GM12878 (cell line): ENCODE measurements at regions of chr2 and their contacts with region 1.

Region 1: GRCh38 chr2:42663106-42663780 is 94.8 kb downstream of the MTA3 start:
- DNase-seq: peak; percentile 46
- ATAC-seq: peak; percentile 96
- H3K4me3 ChIP-seq: no peak overlapping the region
- H3K27ac ChIP-seq: no peak overlapping the region; the same call in 1 of the 2 replicates
- H3K4me1 ChIP-seq: peaks cover 3% of the 10 kb centered on the region; the same call in 1 of the 2 replicates
- H3K27me3 ChIP-seq: no peaks in the 10 kb centered on the region
- CTCF ChIP-seq: peak; percentile 98 to 99 (median 99)
- EP300 ChIP-seq: no peak
- POLR2A ChIP-seq: no peak
- RAD21 ChIP-seq: peak; percentile 98

Region 2: DNA sequence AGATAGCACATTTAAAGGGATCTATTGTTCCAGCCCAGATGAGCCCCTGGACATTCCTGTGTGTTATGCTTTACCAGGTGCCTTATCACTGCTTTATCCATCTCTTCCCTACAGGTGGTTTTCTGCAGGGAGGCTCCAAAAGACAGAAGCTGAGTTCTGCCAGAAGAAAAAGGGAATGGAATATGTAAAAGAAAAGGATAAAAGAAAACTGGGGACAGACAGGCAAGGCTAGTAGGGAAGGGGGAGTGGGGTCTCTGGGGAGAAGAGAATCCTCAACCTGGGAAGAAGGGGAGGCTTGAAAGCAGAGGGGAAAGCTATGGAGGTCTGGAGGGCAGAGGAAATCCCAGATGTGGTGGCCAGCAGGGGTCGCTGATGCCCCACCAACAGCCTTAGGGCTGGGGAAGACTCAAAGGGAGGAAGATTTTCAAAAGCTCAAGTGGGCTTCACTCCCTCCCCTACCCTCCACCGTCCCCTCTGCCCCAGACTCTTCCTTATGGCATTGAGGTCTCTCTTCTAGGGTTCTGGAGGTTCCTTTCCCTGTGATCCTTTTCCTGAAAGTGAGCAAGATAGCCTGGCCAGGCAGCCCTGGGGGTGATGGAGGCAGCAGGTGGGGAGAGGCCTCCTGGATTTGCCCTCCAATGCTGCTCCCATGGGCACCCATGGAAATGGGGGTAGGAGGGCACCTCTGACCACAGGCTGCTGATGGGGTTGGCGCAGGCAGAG is 793.5 kb before region 1 on chr2:
- CTCF ChIA-PET with region 1: no interaction called
- POLR2A ChIA-PET with region 1: no interaction called
- RAD21 ChIA-PET with region 1: no interaction called
- SMC1A ChIA-PET with region 1: no interaction called
- in situ Hi-C with region 1: loop called (anchors 25 kb)
- intact Hi-C with region 1: no loop called
- DNase-seq: peak; percentile 25
- ATAC-seq: peak; percentile 94
- H3K4me3 ChIP-seq: no peak overlapping the region
- H3K27ac ChIP-seq: no peak overlapping the region
- H3K4me1 ChIP-seq: no peaks in the 10 kb centered on the region
- H3K27me3 ChIP-seq: no peaks in the 10 kb centered on the region; a peak in 2 of 4 replicates
- CTCF ChIP-seq: peak; percentile 78 to 90 (median 84)
- EP300 ChIP-seq: no peak
- POLR2A ChIP-seq: no peak
- RAD21 ChIP-seq: peak; percentile 98

Region 3: GRCh38 chr2:42503291-42503690 is 160.0 kb before region 1 on chr2:
- CTCF ChIA-PET with region 1: interaction called, 63 read pairs
- POLR2A ChIA-PET with region 1: no interaction called
- RAD21 ChIA-PET with region 1: interaction called, 13 read pairs
- SMC1A ChIA-PET with region 1: interaction called, 62 read pairs
- in situ Hi-C with region 1: loop called (anchors 5 kb)
- intact Hi-C with region 1: no loop called
- DNase-seq: no peak
- ATAC-seq: no peak
- H3K4me3 ChIP-seq: no peak overlapping the region
- H3K27ac ChIP-seq: no peak overlapping the region
- H3K4me1 ChIP-seq: no peaks in the 10 kb centered on the region
- H3K27me3 ChIP-seq: no peaks in the 10 kb centered on the region
- CTCF ChIP-seq: no peak
- EP300 ChIP-seq: no peak
- POLR2A ChIP-seq: no peak
- RAD21 ChIP-seq: no peak

Region 4: GRCh38 chr2:42575458-42576064 is 87.7 kb before region 1 on chr2:
- CTCF ChIA-PET with region 1: interaction called, 13 read pairs
- POLR2A ChIA-PET with region 1: interaction called, 4 read pairs
- RAD21 ChIA-PET with region 1: interaction called, 6 read pairs
- SMC1A ChIA-PET with region 1: interaction called, 3 read pairs
- in situ Hi-C with region 1: no loop called
- intact Hi-C with region 1: no loop called
- DNase-seq: no peak
- ATAC-seq: peak; percentile 88
- H3K4me3 ChIP-seq: peak overlapping the region; percentile 24
- H3K27ac ChIP-seq: peak overlapping the region; percentile 43
- H3K4me1 ChIP-seq: peaks cover 11% of the 10 kb centered on the region
- H3K27me3 ChIP-seq: no peaks in the 10 kb centered on the region
- CTCF ChIP-seq: no peak
- EP300 ChIP-seq: no peak
- POLR2A ChIP-seq: no peak
- RAD21 ChIP-seq: no peak

Region 5: DNA sequence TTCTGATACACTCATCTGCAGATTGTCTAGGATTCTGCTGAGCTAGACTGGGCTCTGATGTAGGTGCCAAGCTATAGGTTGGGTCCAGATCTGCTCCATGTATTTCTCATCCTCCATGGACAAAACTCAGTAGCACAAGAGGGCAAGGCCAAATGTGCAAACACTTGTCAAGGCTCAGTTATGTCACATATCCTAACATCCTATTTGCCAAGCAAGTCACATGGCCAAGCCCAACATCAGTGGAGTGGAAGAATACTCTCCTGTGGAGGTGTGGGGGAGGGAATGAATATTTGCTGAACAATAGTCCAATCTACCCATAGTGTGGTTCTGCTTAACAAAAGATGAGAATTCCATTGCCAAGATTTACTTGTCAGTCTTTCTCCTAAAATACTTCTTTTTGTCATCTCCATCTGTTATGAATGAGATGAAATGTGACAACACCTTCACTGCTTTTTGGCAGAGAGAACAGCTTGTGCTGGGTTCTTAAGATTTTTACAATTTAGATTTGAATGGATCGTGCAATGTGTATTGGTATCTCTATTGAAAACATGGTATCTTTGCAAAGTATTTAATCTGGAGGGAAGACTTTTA is 10.8 kb after region 1 on chr2:
- CTCF ChIA-PET with region 1: interaction called, 13 read pairs
- POLR2A ChIA-PET with region 1: no interaction called
- RAD21 ChIA-PET with region 1: interaction called, 3 read pairs
- SMC1A ChIA-PET with region 1: interaction called, 15 read pairs
- in situ Hi-C with region 1: no loop called
- intact Hi-C with region 1: no loop called
- DNase-seq: no peak
- ATAC-seq: no peak
- H3K4me3 ChIP-seq: no peak overlapping the region
- H3K27ac ChIP-seq: no peak overlapping the region
- H3K4me1 ChIP-seq: no peaks in the 10 kb centered on the region
- H3K27me3 ChIP-seq: no peaks in the 10 kb centered on the region
- CTCF ChIP-seq: no peak
- EP300 ChIP-seq: no peak
- POLR2A ChIP-seq: no peak
- RAD21 ChIP-seq: no peak

Region 6: DNA sequence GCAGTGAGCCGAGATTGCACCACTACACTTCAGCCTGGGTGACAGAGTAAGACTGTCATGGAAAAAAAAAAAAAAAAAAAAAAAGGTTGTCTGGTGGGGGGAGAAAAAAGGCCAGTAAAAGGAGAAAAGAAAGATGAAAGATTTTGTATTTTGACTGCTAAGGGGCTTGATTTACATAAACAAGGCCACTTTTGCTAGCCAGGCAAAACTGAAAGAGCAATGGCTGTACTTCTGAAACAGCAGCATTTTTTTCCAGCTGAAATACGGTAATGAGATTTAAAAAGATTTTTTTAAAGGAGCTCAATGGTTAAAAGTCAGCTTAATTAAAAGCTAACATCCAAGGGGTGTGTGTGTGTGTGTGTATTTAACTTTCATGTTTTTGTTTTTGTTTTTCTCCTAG is 111.9 kb after region 1 on chr2:
- CTCF ChIA-PET with region 1: interaction called, 6 read pairs
- POLR2A ChIA-PET with region 1: interaction called, 3 read pairs
- RAD21 ChIA-PET with region 1: no interaction called
- SMC1A ChIA-PET with region 1: interaction called, 11 read pairs
- in situ Hi-C with region 1: no loop called
- intact Hi-C with region 1: no loop called
- DNase-seq: no peak
- ATAC-seq: peak; percentile 51
- H3K4me3 ChIP-seq: peak overlapping the region; percentile 13; the same call in 1 of the 2 replicates
- H3K27ac ChIP-seq: peak overlapping the region; percentile 63
- H3K4me1 ChIP-seq: peaks cover 5% of the 10 kb centered on the region
- H3K27me3 ChIP-seq: no peaks in the 10 kb centered on the region
- CTCF ChIP-seq: no peak
- EP300 ChIP-seq: no peak
- POLR2A ChIP-seq: no peak
- RAD21 ChIP-seq: no peak